ENCODE measurements at regions of chr17 and their contacts with region 1.

Region 1: DNA sequence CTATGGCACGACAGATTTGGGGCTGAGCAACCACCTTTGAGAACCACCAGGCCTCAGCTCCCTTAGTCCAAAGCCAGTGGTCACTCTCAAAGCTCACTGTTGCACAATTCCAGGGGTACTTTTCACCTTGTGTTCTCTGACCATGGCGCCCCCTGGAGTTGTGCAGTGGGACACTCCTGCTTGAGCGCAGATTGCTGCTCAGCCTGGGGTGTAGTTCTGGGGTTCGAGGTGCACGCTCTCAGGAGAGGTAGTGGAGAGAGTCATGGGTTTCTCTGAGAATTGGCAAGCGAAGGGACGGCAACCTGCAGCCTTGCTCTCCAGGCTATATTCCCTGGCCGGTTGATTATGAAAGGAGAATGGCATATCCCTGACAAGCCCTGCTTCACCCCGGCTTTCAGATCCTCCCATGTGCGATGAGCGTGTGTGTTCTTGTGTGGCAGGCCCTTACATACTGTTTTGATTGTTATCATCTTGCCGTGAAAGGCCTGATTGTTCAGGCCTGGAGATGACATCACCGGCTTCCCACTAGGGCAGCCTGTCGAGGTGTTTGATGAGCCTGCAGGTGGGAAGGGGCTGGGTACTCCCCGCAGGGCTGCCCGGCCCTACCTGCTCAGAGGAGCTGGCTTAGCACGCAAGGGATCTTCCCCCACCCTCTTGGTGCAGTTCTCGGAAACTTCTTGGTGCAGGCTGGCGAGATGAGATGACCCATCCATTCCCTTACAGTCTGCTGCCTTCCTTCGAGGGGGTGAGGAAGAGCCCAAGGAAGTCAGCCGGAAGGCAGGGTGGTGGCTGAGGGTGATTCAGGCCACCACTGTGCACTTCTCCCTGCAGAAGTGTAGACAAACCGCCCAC is 431.2 kb downstream of the SLC39A11 start:
- DNase-seq: peak; percentile 94
- H3K4me3 Mint-ChIP-seq: peak overlapping the region; percentile 18
- H3K27ac Mint-ChIP-seq: peak overlapping the region; percentile 92
- H3K4me1 Mint-ChIP-seq: peaks cover 50% of the 10 kb centered on the region
- H3K27me3 Mint-ChIP-seq: no peaks in the 10 kb centered on the region
- CTCF ChIP-seq: peak; percentile 54

Region 2: DNA sequence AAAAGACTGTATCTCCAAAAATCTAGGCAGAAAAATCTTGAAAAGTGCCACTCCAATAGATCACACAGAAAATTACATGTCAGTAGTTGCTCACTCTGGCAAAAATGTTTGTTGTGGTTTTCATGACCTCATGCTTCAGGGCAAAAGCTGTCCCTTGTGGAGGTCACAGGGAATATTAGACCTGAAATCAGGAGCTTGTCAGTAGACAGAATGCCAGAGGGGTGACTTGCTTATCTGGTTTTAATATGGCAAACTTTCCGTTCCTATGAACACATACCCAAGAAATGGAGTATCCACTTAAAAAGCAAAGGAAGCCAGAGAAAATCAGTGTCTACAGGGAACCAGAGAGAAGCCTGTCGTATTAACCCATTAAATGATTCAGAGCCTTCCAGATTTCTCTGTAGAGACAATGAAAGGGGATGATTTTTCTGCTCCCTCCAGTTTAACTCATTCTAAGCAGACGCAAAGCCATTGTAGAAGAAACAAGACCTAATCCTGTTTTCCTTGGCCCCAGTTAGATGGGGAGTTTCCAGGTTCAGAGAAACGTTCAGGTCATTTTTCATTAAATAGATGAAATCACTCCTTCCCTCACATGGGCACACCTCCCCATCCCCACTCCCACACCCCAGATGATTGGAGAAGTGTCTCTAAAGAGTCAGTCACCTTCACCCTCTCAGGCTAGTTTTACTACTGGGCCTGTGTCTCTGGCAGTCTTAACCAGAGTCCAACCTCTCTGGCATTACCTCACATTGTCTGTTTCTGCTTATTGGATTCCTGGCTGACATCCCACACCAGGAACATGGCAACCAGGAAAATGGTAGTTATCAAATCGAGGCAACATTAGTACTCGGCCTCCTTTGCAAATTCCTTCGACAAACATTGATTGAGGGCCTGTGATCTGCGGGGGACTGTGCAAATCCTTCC is 534.5 kb before region 1 on chr17:
- CTCF ChIA-PET with region 1: no interaction called
- intact Hi-C with region 1: loop called (anchors 2 kb)
- DNase-seq: peak; percentile 61
- H3K4me3 Mint-ChIP-seq: peak overlapping the region; percentile 90
- H3K27ac Mint-ChIP-seq: peak overlapping the region; percentile 64
- H3K4me1 Mint-ChIP-seq: peaks cover 35% of the 10 kb centered on the region
- H3K27me3 Mint-ChIP-seq: peaks cover 28% of the 10 kb centered on the region
- CTCF ChIP-seq: no peak

Region 3: DNA sequence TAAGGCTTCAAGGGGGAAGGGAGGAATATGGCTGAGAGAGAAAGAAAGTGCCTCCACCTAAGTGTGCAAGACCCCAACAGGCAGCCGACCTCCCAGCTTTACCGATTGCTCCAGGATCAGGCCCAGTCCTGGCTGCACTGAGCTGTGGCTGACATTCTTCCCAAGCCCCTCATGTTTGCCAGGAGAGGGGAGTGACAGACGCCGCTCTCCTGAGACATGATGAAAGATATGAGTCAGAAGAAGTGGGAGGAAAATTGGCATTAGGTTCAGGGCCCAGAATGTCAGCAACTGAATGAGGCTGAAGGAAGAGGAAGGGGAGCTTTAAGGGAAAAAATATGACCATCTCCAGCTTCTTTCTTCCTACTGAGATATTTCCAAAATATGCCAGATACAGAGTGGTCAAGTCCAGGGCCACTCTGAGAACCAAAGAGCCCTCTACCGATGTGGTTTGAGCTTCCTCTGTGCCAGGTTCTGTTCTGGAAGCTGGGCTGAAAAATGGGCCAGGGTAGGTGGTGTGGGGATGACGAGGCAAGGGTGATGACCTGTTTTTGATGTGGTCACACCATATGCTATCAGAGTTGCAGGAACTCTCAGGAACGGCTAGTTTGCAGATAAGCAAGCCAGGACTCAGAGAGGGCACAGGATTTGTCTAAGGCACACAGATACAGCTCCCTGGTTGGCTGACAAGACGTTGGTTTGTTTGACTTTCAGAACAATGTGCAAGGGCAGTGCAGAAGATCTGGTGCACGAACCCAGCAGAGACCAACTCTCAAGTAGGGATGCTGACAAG is 363.8 kb before region 1 on chr17:
- CTCF ChIA-PET with region 1: no interaction called
- intact Hi-C with region 1: no loop called
- DNase-seq: no peak
- H3K4me3 Mint-ChIP-seq: no peak overlapping the region
- H3K27ac Mint-ChIP-seq: no peak overlapping the region
- H3K4me1 Mint-ChIP-seq: peaks cover 14% of the 10 kb centered on the region
- H3K27me3 Mint-ChIP-seq: peaks cover 13% of the 10 kb centered on the region
- CTCF ChIP-seq: no peak

Region 4: GRCh38 chr17:72421128-72422092 is 239.9 kb before region 1 on chr17:
- CTCF ChIA-PET with region 1: interaction called, 3 read pairs
- intact Hi-C with region 1: loop called (anchors 2 kb)
- DNase-seq: peak; percentile 90
- H3K4me3 Mint-ChIP-seq: peak overlapping the region; percentile 51
- H3K27ac Mint-ChIP-seq: peak overlapping the region; percentile 96
- H3K4me1 Mint-ChIP-seq: peaks cover 61% of the 10 kb centered on the region
- H3K27me3 Mint-ChIP-seq: no peaks in the 10 kb centered on the region
- CTCF ChIP-seq: no peak

Region 5: DNA sequence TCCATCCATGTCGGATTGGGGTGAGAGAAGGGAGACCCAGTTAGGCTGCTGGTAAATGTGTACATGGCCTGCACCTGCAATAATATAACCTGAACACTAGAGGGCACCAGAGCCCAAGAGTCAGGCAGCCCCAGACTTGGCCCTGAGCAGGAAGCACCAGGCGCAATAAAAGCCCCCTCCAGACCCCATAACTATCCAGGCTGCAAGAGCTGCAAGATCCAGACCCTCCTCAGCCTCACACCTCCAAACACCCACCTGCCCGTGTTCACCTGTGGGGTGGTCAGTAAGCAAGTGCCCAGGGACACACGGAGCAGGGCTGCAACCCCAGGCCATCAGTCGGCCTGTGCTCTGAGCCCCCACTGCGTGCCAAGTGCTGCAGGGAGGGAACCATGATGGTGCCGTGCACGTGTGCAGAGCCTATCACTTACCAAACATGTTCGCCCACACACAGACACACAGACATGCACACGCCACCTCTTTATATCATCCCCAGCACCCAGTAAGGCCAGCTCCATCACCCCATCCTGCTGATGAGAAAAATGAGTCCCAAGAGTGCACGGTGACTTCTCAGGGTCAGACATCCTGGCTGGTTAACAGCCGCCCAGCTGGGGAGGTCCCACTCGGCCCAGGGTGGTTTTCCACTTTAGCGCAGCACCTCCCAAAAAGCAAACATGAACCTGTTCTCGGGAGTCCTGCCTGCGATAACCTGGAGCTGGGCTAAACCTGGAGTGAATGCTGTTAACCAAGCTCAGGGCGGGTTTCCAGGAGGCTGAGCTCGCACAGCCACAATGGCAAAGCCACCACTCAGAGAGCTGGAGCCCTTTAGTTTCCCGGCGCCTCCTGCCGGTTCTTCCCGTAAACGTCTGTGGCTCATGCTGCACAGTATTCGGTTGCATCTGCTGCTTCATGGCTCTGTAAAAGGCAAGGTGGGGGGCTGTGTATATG is 100.7 kb before region 1 on chr17:
- CTCF ChIA-PET with region 1: interaction called, 4 read pairs
- intact Hi-C with region 1: loop called (anchors 5 kb)
- DNase-seq: peak; percentile 49
- H3K4me3 Mint-ChIP-seq: peak overlapping the region; percentile 21
- H3K27ac Mint-ChIP-seq: no peak overlapping the region
- H3K4me1 Mint-ChIP-seq: peaks cover 8% of the 10 kb centered on the region
- H3K27me3 Mint-ChIP-seq: no peaks in the 10 kb centered on the region
- CTCF ChIP-seq: peak; percentile 21

Region 6: DNA sequence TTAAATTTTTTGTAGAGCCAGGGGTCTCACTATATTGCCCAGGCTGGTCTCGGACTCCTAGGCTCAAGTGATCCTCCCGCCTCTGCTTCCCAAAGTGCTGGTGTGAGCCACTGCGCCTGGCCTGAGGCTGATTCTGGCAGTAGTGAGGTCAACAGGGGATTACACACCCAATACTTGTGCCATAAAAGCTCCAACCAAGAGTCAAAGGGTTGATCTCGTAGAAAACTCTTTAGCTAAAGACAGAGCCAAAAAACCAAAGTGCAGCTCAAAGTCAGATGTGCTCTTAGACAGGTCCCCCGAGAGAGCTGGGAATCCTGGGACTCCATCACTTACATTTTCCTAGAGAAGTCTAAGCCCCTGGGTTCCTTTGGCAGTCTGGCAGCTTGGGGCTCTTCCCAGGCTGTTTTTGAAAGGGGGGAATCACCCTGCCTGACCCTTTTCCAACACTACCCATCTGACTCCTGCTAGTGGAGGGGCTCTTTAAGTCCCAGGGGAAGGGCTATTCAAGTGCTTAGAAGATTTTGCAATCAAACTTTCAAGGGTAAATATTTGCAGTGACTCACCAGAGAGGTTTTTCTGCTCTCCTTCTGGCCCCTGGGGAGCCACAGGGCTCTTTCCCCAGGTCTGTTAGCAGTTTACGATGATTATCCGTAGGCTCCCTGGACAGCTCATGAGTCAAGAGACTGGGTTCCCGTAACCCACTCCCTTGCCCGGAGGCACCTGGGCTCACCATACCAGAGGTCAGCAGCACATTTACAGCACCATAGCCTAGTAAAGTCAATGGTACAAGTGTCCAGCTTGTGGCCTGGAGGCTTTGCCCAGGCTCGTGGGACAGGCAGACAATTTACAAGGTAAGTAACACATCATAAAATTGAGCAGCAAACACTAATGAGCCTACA is 22.4 kb after region 1 on chr17:
- CTCF ChIA-PET with region 1: interaction called, 5 read pairs
- intact Hi-C with region 1: loop called (anchors 1 kb)
- DNase-seq: peak; percentile 85
- H3K4me3 Mint-ChIP-seq: peak overlapping the region; percentile 53
- H3K27ac Mint-ChIP-seq: peak overlapping the region; percentile 97
- H3K4me1 Mint-ChIP-seq: peaks cover 43% of the 10 kb centered on the region
- H3K27me3 Mint-ChIP-seq: no peaks in the 10 kb centered on the region
- CTCF ChIP-seq: no peak